ENCODE measurements at regions of chrX and their contacts with region 1.

Region 1: DNA sequence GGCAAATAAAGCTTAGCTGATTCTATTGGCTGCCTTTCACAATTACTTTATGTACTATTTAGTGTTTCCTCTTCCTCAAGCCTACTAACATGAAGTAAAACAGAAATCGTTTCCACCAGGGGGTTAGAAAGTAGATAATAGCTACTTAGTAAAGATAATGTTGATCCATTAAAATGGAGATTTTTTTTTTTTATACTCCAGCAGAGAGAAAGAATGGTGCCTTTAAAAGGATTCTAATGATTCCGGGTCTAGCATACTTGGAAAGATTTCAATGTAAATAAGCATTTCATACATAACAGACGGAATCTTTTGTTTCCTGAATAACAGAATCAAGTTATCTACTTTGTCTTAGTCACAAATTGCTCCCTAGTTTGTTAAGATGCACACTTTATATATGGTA is 37.1 kb downstream of the GK start:
- DNase-seq: no peak
- ATAC-seq: no peak
- H3K4me3 ChIP-seq: no peak overlapping the region
- H3K4me3 Mint-ChIP-seq: no peak overlapping the region
- H3K27ac ChIP-seq: no peak overlapping the region
- H3K27ac Mint-ChIP-seq: no peak overlapping the region
- H3K4me1 ChIP-seq: no peaks in the 10 kb centered on the region
- H3K4me1 Mint-ChIP-seq: no peaks in the 10 kb centered on the region
- H3K27me3 ChIP-seq: no peaks in the 10 kb centered on the region
- H3K27me3 Mint-ChIP-seq: peaks cover 0 to 3% of the 10 kb centered on the region in 2 donors

Region 2: DNA sequence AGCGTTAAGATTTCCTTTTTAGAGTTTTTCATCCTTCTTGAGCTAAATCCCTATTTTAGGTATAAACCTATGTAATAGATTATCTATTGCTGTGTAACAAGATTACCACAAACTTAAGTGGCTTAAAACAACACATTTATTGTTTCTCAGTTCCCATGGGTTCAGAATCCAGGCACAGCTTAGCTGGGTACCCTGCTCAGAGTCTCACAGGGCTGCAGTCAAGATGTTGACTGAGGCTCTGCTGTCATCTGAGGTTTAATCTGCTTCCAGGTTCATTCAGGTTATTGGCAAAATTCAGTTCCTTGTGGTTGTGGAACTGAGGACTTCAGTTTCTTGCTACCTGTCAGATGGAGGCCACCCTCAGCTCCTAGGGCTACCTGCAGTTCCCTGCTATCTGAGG is 23.8 kb after region 1 on chrX:
- CTCF ChIA-PET with region 1: interaction called in 1 of 2 experiments, 10 read pairs
- POLR2A ChIA-PET with region 1: no interaction called
- DNase-seq: no peak
- ATAC-seq: no peak
- H3K4me3 ChIP-seq: no peak overlapping the region
- H3K4me3 Mint-ChIP-seq: no peak overlapping the region
- H3K27ac ChIP-seq: no peak overlapping the region
- H3K27ac Mint-ChIP-seq: no peak overlapping the region
- H3K4me1 ChIP-seq: peaks cover 2% of the 10 kb centered on the region in 2 experiments
- H3K4me1 Mint-ChIP-seq: peaks cover 0 to 12% (median 8%) of the 10 kb centered on the region in 3 donors
- H3K27me3 ChIP-seq: no peaks in the 10 kb centered on the region
- H3K27me3 Mint-ChIP-seq: peaks cover 0 to 4% of the 10 kb centered on the region in 2 donors

Measured in T-cell (primary cell).